MCF 10A (cell line): ENCODE measurements at regions of chr19 and their contacts with region 1.

Region 1: GRCh38 chr19:10251792-10252694 is at the start of gene MRPL4:
- DNase-seq: peak; percentile 100
- H3K4me3 Mint-ChIP-seq: peak within 1 kb of the TSS; percentile 92
- H3K27ac Mint-ChIP-seq: peak within 1 kb of the TSS; percentile 97
- H3K4me1 Mint-ChIP-seq: peaks cover 5% of the 10 kb centered on the region
- H3K27me3 Mint-ChIP-seq: no peaks in the 10 kb centered on the region
- CTCF ChIP-seq: no peak
- total RNA-seq, gene MRPL4: 99.1 and 120 TPM in 2 replicates

Region 2: GRCh38 chr19:10027158-10027693 is 224.8 kb before region 1 on chr19:
- CTCF ChIA-PET with region 1: interaction called, 11 read pairs
- POLR2A ChIA-PET with region 1: no interaction called
- intact Hi-C with region 1: loop called (anchors 2 kb)
- DNase-seq: peak; percentile 15
- H3K4me3 Mint-ChIP-seq: no peak overlapping the region
- H3K27ac Mint-ChIP-seq: no peak overlapping the region
- H3K4me1 Mint-ChIP-seq: no peaks in the 10 kb centered on the region
- H3K27me3 Mint-ChIP-seq: peaks cover 16% of the 10 kb centered on the region
- CTCF ChIP-seq: no peak

Region 3: DNA sequence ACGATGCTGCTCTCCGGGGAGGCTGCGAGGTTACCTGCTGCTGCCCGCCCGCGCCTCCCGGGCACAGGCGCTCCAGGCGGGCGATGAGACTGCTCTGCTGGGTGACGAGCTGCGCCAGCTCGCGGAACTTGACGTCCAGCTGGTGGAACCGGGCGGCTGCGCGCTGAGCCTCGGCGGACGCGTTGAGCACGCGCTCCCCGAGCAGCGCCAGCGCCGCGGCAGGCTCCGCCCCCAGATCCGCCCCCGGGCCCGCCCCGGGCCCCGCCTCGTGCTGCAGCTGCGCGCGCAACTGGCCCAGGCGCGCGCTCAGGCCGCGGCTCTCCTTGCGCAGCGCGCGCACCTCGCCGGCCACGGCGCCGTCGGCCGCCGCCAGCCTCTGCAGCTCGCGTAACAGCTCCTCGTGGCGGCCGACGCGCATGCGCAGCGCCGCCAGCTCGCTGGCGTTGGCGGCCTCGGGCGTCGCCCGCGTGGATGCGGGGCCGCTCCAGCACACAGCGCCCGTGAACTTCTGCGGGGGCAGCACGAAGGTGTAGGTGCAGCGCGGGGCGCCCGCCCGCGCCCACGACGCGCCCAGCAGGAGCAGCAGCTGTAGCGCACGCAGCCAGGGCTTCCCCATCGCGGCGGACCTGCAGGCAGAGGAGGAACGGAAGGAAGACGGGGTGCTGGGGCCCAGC is 156.0 kb before region 1 on chr19:
- CTCF ChIA-PET with region 1: interaction called, 6 read pairs
- POLR2A ChIA-PET with region 1: no interaction called
- intact Hi-C with region 1: loop called (anchors 1 kb)
- DNase-seq: peak; percentile 87
- H3K4me3 Mint-ChIP-seq: peak overlapping the region; percentile 66
- H3K27ac Mint-ChIP-seq: no peak overlapping the region
- H3K4me1 Mint-ChIP-seq: no peaks in the 10 kb centered on the region
- H3K27me3 Mint-ChIP-seq: no peaks in the 10 kb centered on the region
- CTCF ChIP-seq: no peak

Region 4: DNA sequence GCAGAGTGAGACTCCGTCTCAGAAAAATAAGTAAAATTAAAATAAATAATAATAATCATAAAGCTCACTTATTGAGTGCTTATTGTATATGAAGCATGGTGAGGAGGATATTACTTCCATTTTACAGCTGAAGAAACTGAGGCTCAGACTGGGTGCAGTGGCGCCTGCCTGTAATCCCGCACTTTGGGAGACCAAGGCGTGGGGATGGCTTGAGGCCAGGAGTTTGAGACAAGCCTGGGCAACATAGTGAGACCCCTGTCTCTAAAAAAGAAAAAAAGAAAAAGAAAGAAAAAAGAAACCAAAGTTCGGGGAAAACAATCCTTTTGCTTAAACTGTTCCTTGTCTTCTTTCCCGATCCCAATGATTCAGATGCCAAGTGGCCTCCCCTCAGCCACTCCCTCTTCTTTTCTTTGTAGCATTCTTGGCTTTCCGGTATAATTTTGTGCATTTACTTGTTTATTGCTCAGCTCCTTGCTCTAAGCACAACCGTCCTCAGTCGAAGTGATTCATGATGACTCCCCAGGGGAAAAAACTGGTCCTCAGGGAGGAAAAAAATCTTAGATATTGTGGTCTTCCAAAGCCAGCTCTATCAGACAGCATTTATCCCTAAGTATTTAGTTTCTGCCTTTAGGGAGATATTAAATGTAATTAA is 131.4 kb before region 1 on chr19:
- CTCF ChIA-PET with region 1: interaction called, 4 read pairs
- POLR2A ChIA-PET with region 1: interaction called, 7 read pairs
- intact Hi-C with region 1: loop called (anchors 1 kb)
- DNase-seq: peak; percentile 68
- H3K4me3 Mint-ChIP-seq: peak overlapping the region; percentile 41
- H3K27ac Mint-ChIP-seq: no peak overlapping the region
- H3K4me1 Mint-ChIP-seq: peaks cover 6% of the 10 kb centered on the region
- H3K27me3 Mint-ChIP-seq: no peaks in the 10 kb centered on the region
- CTCF ChIP-seq: no peak

Region 5: DNA sequence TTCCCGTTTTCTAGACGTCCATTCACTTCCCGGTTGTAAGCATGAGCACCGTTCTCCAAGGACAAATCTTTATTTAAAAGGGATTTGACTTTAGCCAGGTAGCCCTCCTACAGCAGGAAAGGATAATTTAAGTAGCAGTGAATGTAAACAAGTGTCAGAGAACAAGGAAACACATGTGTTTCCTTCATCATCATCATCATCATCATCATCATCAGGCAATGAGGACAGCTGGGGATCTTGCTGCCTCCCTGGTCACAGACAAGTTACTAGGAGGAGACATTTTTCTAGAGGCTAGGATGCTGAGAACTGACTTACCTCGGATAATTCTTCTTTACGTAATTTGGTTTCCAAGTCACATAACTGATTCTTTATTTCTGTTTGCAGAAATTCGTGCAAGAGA is 71.6 kb before region 1 on chr19:
- CTCF ChIA-PET with region 1: no interaction called
- POLR2A ChIA-PET with region 1: no interaction called
- intact Hi-C with region 1: no loop called
- DNase-seq: no peak
- H3K4me3 Mint-ChIP-seq: no peak overlapping the region
- H3K27ac Mint-ChIP-seq: no peak overlapping the region
- H3K4me1 Mint-ChIP-seq: no peaks in the 10 kb centered on the region
- H3K27me3 Mint-ChIP-seq: no peaks in the 10 kb centered on the region
- CTCF ChIP-seq: no peak

Region 6: GRCh38 chr19:10194500-10195289 is 57.3 kb before region 1 on chr19 and contains the start of gene DNMT1:
- CTCF ChIA-PET with region 1: interaction called, 3 read pairs
- POLR2A ChIA-PET with region 1: interaction called, 5 read pairs
- intact Hi-C with region 1: loop called (anchors 2 kb)
- DNase-seq: peak; percentile 96
- H3K4me3 Mint-ChIP-seq: peak within 1 kb of the TSS; percentile 92
- H3K27ac Mint-ChIP-seq: peak within 1 kb of the TSS; percentile 57
- H3K4me1 Mint-ChIP-seq: no peaks in the 10 kb centered on the region
- H3K27me3 Mint-ChIP-seq: no peaks in the 10 kb centered on the region
- CTCF ChIP-seq: no peak
- total RNA-seq, gene DNMT1: 47.7 and 76.4 TPM in 2 replicates

Region 7: GRCh38 chr19:10230861-10231611 is 21.0 kb before region 1 on chr19 and contains the start of gene S1PR2:
- CTCF ChIA-PET with region 1: interaction called, 10 read pairs
- POLR2A ChIA-PET with region 1: no interaction called
- intact Hi-C with region 1: no loop called
- DNase-seq: peak; percentile 49
- H3K4me3 Mint-ChIP-seq: peak within 1 kb of the TSS; percentile 74
- H3K27ac Mint-ChIP-seq: no peak within 1 kb of the TSS
- H3K4me1 Mint-ChIP-seq: no peaks in the 10 kb centered on the region
- H3K27me3 Mint-ChIP-seq: no peaks in the 10 kb centered on the region
- CTCF ChIP-seq: no peak
- total RNA-seq, gene S1PR2: 0.64 and 0.89 TPM in 2 replicates

Region 8: DNA sequence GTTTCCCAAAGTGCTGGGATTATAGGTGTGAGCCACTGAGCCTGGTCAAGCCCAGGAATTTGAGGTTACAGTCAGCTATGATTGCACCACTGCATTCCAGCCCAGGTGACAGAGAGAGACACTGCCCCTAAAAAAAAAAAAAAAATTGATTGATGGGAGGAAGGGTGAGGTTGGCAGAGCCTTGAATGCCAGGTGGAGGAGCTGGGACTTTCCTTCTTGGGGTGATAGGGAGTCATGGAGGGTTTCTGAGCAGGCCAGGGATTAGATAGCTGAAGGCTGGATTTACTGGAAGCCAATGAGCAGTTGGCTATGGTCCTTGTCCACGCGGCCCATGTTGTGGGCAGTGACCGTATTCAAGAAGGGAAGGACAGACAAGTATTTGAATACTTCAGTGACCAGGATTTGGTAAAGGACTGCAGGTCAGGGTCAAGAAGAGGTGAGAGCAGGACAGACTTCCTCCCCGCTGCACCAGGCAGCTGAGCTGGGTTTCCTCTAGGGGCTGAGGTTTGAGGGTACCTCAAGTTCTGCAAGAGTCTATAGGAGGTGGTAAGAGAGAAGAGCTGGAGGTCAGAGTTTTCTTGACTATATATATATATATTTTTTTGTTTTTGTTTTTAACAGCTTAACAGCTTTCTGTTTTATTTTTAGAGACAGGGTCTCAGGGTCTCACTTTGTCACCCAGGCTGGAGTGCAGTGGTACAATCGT is 27.8 kb after region 1 on chr19:
- CTCF ChIA-PET with region 1: no interaction called
- POLR2A ChIA-PET with region 1: no interaction called
- intact Hi-C with region 1: no loop called
- DNase-seq: no peak
- H3K4me3 Mint-ChIP-seq: no peak overlapping the region
- H3K27ac Mint-ChIP-seq: no peak overlapping the region
- H3K4me1 Mint-ChIP-seq: peaks cover 8% of the 10 kb centered on the region
- H3K27me3 Mint-ChIP-seq: no peaks in the 10 kb centered on the region
- CTCF ChIP-seq: no peak